CD4-positive, alpha-beta memory T cell (primary cell): ENCODE measurements at regions of chr12 and their contacts with region 1.

Region 1: DNA sequence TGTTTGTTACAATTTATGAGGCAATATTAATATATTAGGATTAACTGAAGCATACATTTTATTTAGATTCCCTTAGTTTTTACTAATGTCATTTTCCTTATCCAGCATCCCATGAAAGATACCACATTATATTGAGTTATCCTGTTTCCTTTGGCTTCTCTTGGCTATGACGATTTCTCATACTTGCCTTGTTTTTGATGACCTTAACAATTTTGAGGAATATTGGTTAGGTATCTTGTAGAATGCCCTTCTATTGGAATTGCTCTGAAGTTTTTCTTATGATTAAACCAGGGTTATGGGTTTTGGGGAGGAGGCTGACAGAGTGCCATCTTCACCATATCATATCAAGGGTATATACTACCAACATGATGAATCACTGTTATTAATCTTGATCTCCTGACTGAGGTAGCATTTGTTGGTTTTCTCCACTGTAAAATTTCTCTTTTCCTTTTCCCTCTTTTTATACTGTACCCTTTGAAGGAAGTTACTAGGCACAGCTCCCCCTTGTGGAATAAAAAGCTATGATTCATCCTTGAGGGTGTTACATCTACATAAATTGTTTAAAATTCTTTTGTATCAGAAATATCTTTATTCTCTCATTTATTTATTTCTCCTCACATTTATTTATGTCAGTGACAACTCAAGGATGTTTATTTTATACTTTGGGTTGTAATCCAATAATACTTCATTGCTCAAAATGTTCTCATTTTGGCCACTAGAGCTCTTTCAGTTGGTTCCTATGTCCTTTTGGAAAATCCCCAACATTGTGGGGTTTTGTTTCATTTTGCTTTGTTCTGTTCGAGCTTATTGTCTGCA is 239.0 kb downstream of the SLC16A7 start:
- DNase-seq: peak in 4 of 5 donors; percentile 1 to 17 (median 15)
- H3K4me3 ChIP-seq: no peak overlapping the region
- H3K4me3 Mint-ChIP-seq: no peak overlapping the region
- H3K27ac ChIP-seq: no peak overlapping the region
- H3K27ac Mint-ChIP-seq: peak overlapping the region in 1 of 7 donors; percentile 7
- H3K4me1 ChIP-seq: no peaks in the 10 kb centered on the region
- H3K4me1 Mint-ChIP-seq: no peaks in the 10 kb centered on the region
- H3K27me3 ChIP-seq: no peaks in the 10 kb centered on the region
- H3K27me3 Mint-ChIP-seq: peaks cover 6% of the 10 kb centered on the region in 2 donors

Region 2: DNA sequence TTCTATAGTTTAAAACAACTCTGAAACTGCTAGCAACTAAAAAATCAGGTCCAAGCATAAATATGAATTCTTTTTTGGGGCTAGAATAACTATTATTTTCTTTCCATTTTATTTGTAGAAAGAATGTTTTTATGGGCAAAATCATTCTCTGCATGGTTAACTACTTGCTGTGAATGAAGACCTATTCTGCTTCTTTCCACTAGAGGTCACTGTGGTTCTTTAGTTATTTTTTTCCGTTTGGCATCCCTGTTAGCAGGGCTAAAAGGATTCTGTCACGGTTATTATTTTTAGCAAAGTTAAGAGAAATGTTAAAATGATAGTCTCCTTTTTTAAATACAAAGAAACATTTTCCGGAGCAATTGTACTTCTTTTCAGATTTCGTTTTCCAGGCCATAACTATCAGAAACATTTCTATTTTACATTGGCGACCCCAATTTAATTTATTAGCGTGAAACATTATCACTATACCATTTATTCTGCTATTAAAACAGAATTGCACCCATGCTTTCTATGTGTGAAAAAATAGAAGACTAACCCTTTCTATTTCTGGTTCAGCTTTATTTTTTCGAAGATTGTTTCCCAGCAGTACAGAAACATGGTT is 1488.7 kb before region 1 on chr12:
- CTCF ChIA-PET with region 1: no interaction called
- POLR2A ChIA-PET with region 1: no interaction called
- intact Hi-C with region 1: loop called (anchors 2 kb)
- DNase-seq: peak in 4 of 5 donors; percentile 16 to 37 (median 22)
- H3K4me3 ChIP-seq: no peak overlapping the region
- H3K4me3 Mint-ChIP-seq: no peak overlapping the region
- H3K27ac ChIP-seq: no peak overlapping the region
- H3K27ac Mint-ChIP-seq: no peak overlapping the region
- H3K4me1 ChIP-seq: no peaks in the 10 kb centered on the region
- H3K4me1 Mint-ChIP-seq: no peaks in the 10 kb centered on the region
- H3K27me3 ChIP-seq: no peaks in the 10 kb centered on the region
- H3K27me3 Mint-ChIP-seq: peaks cover 9 to 16% of the 10 kb centered on the region in 2 donors

Region 3: DNA sequence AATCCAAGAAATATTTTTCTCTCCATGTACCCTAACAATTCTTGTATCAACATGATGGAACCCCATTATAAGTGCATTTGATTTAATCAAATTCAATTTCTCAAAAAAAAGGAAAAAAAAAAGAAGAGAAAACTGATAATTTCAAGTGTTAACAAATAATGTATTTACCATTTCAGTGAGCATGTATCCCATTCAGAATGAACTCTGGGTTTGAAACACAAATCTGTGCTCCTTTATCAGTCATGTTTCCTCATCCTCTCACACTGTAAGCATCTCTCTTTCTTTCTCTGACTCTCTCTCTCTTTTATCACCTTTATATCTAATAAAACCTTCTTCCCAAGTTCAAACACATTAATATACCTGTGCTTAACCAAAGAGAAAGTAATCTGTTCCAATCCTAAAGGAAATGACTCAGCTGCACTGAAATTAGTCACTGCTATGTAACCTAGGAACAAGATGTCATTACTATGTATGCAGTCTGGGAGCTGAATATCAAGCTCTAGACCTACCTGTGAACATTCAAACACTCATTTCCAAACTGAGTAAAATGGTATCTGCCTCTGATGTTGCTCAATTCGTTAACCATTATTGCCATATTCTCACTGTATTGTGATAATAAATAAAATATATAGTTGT is 779.5 kb before region 1 on chr12:
- CTCF ChIA-PET with region 1: no interaction called
- POLR2A ChIA-PET with region 1: no interaction called
- intact Hi-C with region 1: no loop called
- DNase-seq: no peak
- H3K4me3 ChIP-seq: no peak overlapping the region
- H3K4me3 Mint-ChIP-seq: no peak overlapping the region
- H3K27ac ChIP-seq: no peak overlapping the region
- H3K27ac Mint-ChIP-seq: no peak overlapping the region
- H3K4me1 ChIP-seq: no peaks in the 10 kb centered on the region
- H3K4me1 Mint-ChIP-seq: no peaks in the 10 kb centered on the region
- H3K27me3 ChIP-seq: no peaks in the 10 kb centered on the region
- H3K27me3 Mint-ChIP-seq: no peaks in the 10 kb centered on the region

Region 4: GRCh38 chr12:59403259-59403932 is 431.5 kb before region 1 on chr12:
- CTCF ChIA-PET with region 1: interaction called, 12 read pairs
- POLR2A ChIA-PET with region 1: no interaction called
- intact Hi-C with region 1: loop called (anchors 1 kb)
- DNase-seq: peak in 4 of 5 donors; percentile 27 to 45 (median 37)
- H3K4me3 ChIP-seq: no peak overlapping the region
- H3K4me3 Mint-ChIP-seq: peak overlapping the region in 1 of 8 donors; percentile 47
- H3K27ac ChIP-seq: no peak overlapping the region
- H3K27ac Mint-ChIP-seq: no peak overlapping the region
- H3K4me1 ChIP-seq: no peaks in the 10 kb centered on the region
- H3K4me1 Mint-ChIP-seq: peaks cover 0 to 4% (median 3%) of the 10 kb centered on the region in 4 donors
- H3K27me3 ChIP-seq: no peaks in the 10 kb centered on the region
- H3K27me3 Mint-ChIP-seq: peaks cover 1% of the 10 kb centered on the region in 2 donors

Region 5: DNA sequence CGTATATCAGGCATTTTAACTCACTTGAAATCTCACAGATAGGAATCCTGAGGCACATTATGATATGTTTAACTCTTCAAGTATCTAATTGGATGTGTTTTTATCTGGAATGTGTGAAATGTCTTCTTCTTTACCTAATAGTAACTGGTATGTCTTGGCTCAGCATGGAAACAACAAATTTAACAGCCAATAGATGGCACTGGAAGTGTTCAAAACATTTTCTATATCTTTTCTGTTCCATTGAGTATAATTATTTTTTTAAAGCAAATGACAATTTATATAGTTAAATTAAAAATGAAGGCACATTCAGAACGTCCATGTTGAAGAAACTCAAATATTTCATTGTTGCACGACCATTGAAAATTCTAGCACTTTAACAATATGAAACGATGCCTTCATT is 403.6 kb before region 1 on chr12:
- CTCF ChIA-PET with region 1: interaction called, 7 read pairs
- POLR2A ChIA-PET with region 1: no interaction called
- intact Hi-C with region 1: loop called (anchors 1 kb)
- DNase-seq: peak in 1 of 5 donors; percentile 5
- H3K4me3 ChIP-seq: no peak overlapping the region
- H3K4me3 Mint-ChIP-seq: no peak overlapping the region
- H3K27ac ChIP-seq: no peak overlapping the region
- H3K27ac Mint-ChIP-seq: no peak overlapping the region
- H3K4me1 ChIP-seq: no peaks in the 10 kb centered on the region
- H3K4me1 Mint-ChIP-seq: no peaks in the 10 kb centered on the region
- H3K27me3 ChIP-seq: no peaks in the 10 kb centered on the region
- H3K27me3 Mint-ChIP-seq: peaks cover 2% of the 10 kb centered on the region in 2 donors

Region 6: GRCh38 chr12:59444932-59445331 is 389.9 kb before region 1 on chr12:
- CTCF ChIA-PET with region 1: interaction called, 13 read pairs
- POLR2A ChIA-PET with region 1: no interaction called
- intact Hi-C with region 1: no loop called
- DNase-seq: peak in 4 of 5 donors; percentile 7 to 24 (median 18)
- H3K4me3 ChIP-seq: no peak overlapping the region
- H3K4me3 Mint-ChIP-seq: no peak overlapping the region
- H3K27ac ChIP-seq: no peak overlapping the region
- H3K27ac Mint-ChIP-seq: no peak overlapping the region
- H3K4me1 ChIP-seq: no peaks in the 10 kb centered on the region
- H3K4me1 Mint-ChIP-seq: no peaks in the 10 kb centered on the region
- H3K27me3 ChIP-seq: no peaks in the 10 kb centered on the region
- H3K27me3 Mint-ChIP-seq: peaks cover 1 to 3% of the 10 kb centered on the region in 2 donors

Region 7: DNA sequence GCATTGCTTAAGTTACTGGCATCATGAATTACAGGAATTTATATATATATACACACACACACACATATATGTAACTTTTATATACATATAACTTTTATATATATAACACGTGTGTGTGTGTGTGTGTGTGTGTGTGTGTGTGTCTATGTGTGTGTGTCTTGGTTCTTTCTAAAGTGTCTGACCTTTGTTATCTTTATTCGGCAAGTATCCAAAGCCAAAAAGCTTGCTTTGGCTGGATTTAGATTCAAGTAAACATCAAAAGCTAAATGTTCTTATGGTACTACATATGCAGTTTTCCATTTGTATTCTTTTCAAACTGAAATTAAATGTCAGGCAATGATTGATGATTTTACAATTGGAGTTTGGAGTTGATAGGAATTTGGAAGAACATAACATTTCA is 169.2 kb before region 1 on chr12:
- CTCF ChIA-PET with region 1: no interaction called
- POLR2A ChIA-PET with region 1: no interaction called
- intact Hi-C with region 1: no loop called
- DNase-seq: no peak
- H3K4me3 ChIP-seq: no peak overlapping the region
- H3K4me3 Mint-ChIP-seq: no peak overlapping the region
- H3K27ac ChIP-seq: no peak overlapping the region
- H3K27ac Mint-ChIP-seq: no peak overlapping the region
- H3K4me1 ChIP-seq: peaks cover 4% of the 10 kb centered on the region
- H3K4me1 Mint-ChIP-seq: peaks cover 23 to 47% (median 31%) of the 10 kb centered on the region in 4 donors
- H3K27me3 ChIP-seq: no peaks in the 10 kb centered on the region
- H3K27me3 Mint-ChIP-seq: no peaks in the 10 kb centered on the region